ENCODE measurements at regions of chr17 and their contacts with region 1.

Region 1: DNA sequence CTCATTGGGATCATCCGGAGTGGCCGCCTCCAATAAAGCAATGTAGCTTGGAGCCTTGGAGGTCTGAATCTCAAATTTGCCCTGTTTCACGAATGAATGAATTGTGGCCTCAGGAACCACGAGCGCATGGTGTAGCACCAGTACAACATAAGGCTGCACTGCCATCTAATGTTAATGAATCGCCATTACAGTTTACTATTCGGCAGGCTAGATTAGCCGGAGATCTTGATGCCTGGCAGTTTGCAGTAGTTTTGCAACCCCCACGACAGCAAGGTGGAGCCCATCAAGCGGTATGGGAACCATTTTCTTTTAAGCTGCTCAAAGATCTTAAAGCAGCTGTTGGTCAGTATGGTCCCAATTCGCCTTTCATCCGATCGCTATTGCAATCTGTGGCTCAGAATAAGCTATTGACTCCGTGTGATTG is 18.8 kb downstream of the ALOX15B start:
- DNase-seq: peak; percentile 76
- H3K4me3 ChIP-seq: no peak overlapping the region
- H3K27ac ChIP-seq: no peak overlapping the region
- H3K4me1 ChIP-seq: peaks cover 16% of the 10 kb centered on the region
- H3K27me3 ChIP-seq: peaks cover 28 to 38% of the 10 kb centered on the region in 2 experiments
- CTCF ChIP-seq: peak; percentile 63 to 70
- POLR2A ChIP-seq: no peak

Region 2: GRCh38 chr17:7862692-7863437 is 194.8 kb before region 1 on chr17:
- CTCF ChIA-PET with region 1: interaction called, 14 read pairs
- POLR2A ChIA-PET with region 1: no interaction called
- dilution Hi-C with region 1: no loop called
- intact Hi-C with region 1: loop called (anchors 1 kb)
- DNase-seq: peak; percentile 57
- H3K4me3 ChIP-seq: no peak overlapping the region
- H3K27ac ChIP-seq: no peak overlapping the region
- H3K4me1 ChIP-seq: peaks cover 15% of the 10 kb centered on the region
- H3K27me3 ChIP-seq: no peaks in the 10 kb centered on the region
- CTCF ChIP-seq: peak; percentile 46 to 63
- POLR2A ChIP-seq: no peak

Region 3: GRCh38 chr17:7989781-7990655 is 67.7 kb before region 1 on chr17:
- CTCF ChIA-PET with region 1: interaction called, 81 read pairs
- POLR2A ChIA-PET with region 1: no interaction called
- dilution Hi-C with region 1: no loop called
- intact Hi-C with region 1: loop called (anchors 1 kb)
- DNase-seq: peak; percentile 66
- H3K4me3 ChIP-seq: peak overlapping the region; percentile 45 to 53 (median 51)
- H3K27ac ChIP-seq: no peak overlapping the region
- H3K4me1 ChIP-seq: peaks cover 4% of the 10 kb centered on the region
- H3K27me3 ChIP-seq: peaks cover 3 to 12% of the 10 kb centered on the region in 2 experiments
- CTCF ChIP-seq: peak; percentile 93 to 98
- POLR2A ChIP-seq: no peak

Region 4: DNA sequence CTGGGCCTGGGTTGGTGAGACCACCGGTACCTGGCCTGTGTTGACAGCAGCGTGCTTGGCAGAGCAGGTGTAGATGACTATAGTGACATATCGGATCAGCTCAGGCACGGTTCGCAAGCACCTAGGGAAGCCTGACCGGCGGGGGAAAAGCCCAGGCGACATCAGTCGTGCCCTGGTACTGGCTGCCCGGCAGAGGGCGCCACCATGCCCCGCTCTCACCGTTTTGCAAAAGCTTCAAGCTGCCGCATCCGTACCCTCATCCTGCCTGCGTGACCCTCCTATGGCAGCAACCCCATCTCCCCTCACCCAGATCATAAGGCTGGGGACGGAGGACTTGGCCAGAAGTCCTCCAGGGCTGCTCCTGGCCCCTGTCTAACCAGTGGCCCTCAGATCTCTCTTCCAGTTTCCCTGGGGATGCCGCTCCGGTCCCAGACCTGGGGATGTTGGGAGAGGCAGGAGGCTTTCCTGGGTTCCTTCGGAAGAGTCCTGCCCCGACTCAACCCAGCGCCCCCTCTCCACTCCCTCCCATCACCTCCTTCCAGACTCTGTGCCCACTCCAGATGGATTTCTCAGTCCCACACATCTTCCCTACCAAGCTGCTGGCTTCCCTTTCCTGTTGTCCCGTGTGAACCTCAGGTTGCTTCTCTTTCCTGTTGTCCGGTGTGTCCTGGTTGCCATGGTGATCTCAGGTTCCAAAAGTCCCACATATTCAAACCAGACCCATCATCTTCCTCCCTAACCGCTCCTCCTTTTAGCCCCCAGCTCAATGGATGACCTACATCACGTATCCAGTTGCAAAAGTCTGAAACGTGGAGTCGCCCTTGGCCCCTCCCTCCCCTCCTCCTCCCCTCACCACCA is 16.2 kb after region 1 on chr17:
- CTCF ChIA-PET with region 1: interaction called, 158 read pairs
- POLR2A ChIA-PET with region 1: no interaction called
- dilution Hi-C with region 1: no loop called
- intact Hi-C with region 1: no loop called
- DNase-seq: peak; percentile 59
- H3K4me3 ChIP-seq: no peak overlapping the region
- H3K27ac ChIP-seq: no peak overlapping the region
- H3K4me1 ChIP-seq: no peaks in the 10 kb centered on the region
- H3K27me3 ChIP-seq: peaks cover 35 to 38% of the 10 kb centered on the region in 2 experiments
- CTCF ChIP-seq: peak; percentile 92 to 98
- POLR2A ChIP-seq: no peak

Region 5: GRCh38 chr17:8109661-8110464 is 52.2 kb after region 1 on chr17:
- CTCF ChIA-PET with region 1: interaction called, 191 read pairs
- POLR2A ChIA-PET with region 1: no interaction called
- dilution Hi-C with region 1: no loop called
- intact Hi-C with region 1: loop called (anchors 1 kb)
- DNase-seq: peak; percentile 28
- H3K4me3 ChIP-seq: no peak overlapping the region
- H3K27ac ChIP-seq: no peak overlapping the region
- H3K4me1 ChIP-seq: no peaks in the 10 kb centered on the region
- H3K27me3 ChIP-seq: peaks cover 13 to 21% of the 10 kb centered on the region in 2 experiments
- CTCF ChIP-seq: peak; percentile 92 to 93
- POLR2A ChIP-seq: no peak

Measured in endothelial cell of umbilical vein (primary cell).